ENCODE measurements at regions of chr10 and their contacts with region 1.

Region 1: DNA sequence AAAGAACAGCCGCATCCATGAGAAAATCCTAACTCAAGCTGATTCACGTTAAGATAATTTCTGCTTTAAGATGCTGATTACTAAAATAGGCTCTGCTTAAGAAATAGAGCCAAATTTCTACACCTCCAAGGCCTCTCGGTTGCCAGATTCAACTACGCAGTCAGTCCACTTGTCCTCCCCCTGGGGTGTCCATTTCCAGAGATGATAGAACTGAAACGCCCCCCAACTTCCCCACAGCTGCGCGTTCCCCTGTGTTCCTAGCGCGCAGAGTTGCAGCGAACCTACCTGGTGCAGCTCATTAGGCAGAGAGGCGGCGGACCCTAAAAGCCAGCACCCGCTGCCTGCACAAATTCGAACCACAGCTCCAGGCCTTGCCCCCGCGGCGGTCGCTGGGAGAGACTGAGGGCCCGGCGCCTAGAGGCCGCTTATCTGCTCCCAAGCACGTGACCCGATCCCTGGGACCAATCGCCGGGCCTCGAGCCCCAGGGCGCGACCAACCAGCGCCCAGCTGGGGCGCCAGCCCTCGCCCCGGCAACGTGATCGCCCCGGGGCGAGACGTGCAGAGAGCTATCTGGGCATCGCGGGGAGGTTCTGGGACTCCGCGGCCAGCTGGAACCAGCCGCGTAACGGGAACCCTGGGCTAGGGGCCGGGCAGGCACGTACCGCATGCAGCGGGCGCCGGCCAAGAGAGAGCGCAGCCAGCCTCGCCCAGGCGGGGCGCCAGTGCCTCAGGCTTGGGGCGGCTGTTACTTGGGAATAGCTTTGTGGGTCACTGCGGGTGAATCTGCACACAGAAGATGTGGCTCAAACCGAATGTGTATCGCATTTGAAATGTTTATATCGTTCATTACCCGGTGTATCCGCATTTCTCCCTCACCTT is at the start of gene PPP1R3C:
- DNase-seq: peak; percentile 82
- H3K4me3 ChIP-seq: peak within 1 kb of the TSS; percentile 85
- H3K27ac ChIP-seq: peak within 1 kb of the TSS; percentile 60
- H3K27me3 ChIP-seq: no peaks in the 10 kb centered on the region
- CTCF ChIP-seq: peak; percentile 49
- polyA plus RNA-seq, gene PPP1R3C: 42.2 and 51.1 TPM in 2 replicates

Region 2: GRCh38 chr10:91298224-91298871 is 334.6 kb before region 1 on chr10:
- CTCF ChIA-PET with region 1: interaction called, 112 read pairs
- POLR2A ChIA-PET with region 1: interaction called, 3 read pairs
- DNase-seq: peak; percentile 55
- H3K4me3 ChIP-seq: peak overlapping the region; percentile 54
- H3K27ac ChIP-seq: peak overlapping the region; percentile 21
- H3K27me3 ChIP-seq: no peaks in the 10 kb centered on the region
- CTCF ChIP-seq: peak; percentile 95

Region 3: DNA sequence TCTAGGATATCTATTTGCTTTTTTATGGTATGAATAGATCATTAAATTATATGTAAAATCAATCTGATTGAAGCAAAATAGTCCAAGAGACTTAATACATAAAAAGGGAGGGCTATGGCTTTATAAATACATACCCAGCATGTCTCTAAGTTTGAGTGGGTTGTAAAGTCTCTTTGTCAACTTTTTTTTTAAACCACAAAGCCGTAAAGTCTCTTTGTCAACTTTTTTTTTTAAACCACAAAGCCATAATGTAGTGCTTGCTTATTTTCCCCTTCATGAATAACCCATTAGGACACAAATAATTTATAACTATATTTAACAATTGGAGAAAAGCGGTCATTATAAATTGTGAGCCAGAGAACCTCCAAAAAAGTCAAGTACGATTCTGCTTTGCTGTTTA is 217.1 kb before region 1 on chr10:
- CTCF ChIA-PET with region 1: interaction called, 20 read pairs
- POLR2A ChIA-PET with region 1: interaction called, 5 read pairs
- DNase-seq: no peak
- H3K4me3 ChIP-seq: no peak overlapping the region
- H3K27ac ChIP-seq: no peak overlapping the region
- H3K27me3 ChIP-seq: no peaks in the 10 kb centered on the region
- CTCF ChIP-seq: no peak

Region 4: GRCh38 chr10:91511549-91512330 is 121.2 kb before region 1 on chr10:
- CTCF ChIA-PET with region 1: interaction called, 16 read pairs
- POLR2A ChIA-PET with region 1: interaction called, 7 read pairs
- DNase-seq: peak; percentile 38
- H3K4me3 ChIP-seq: no peak overlapping the region
- H3K27ac ChIP-seq: no peak overlapping the region
- H3K27me3 ChIP-seq: no peaks in the 10 kb centered on the region
- CTCF ChIP-seq: no peak

Region 5: DNA sequence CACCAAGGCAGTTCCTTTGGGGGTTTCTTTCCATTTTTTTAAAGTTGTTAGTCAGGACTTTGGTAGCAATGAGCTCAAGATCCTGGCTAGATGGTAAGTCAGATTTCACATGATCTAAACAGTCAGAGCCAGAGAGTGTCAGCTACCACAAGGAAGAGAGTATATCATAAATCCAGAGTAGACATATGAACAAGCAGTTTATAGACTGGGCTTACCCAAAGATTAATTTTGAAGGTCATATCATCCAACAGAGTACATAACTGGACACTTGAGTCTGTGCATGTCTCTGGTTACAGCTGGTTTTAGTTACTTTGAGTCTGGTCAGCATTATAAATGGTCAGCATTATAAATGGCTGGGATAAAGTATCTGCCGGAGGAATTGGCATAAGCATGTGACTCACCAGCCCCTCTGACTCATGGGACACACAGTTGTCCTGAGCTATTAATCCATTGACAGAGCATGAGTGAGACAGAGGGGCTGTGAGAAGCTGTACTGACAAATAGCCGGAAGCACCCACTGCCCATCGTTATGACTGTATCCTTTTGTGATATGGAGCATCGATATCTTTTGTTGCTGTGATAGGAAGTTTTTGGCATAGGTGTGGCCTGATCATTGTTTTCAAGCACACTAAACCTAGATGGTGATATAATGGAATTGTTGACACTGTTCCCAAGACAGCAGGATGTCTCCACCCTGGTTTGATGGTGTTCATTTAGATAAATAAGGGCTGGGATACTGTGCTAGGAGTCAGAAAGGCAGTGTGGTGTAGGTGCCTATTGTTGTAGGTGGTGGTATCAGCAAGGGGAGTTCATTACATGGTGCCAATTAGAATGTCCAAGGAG is 19.3 kb before region 1 on chr10:
- CTCF ChIA-PET with region 1: interaction called, 14 read pairs
- POLR2A ChIA-PET with region 1: interaction called, 38 read pairs
- DNase-seq: peak; percentile 89
- H3K4me3 ChIP-seq: no peak overlapping the region
- H3K27ac ChIP-seq: peak overlapping the region; percentile 96
- H3K27me3 ChIP-seq: no peaks in the 10 kb centered on the region
- CTCF ChIP-seq: no peak

Region 6: GRCh38 chr10:91652364-91652763 is 19.5 kb after region 1 on chr10:
- CTCF ChIA-PET with region 1: interaction called, 26 read pairs
- POLR2A ChIA-PET with region 1: interaction called, 6 read pairs
- DNase-seq: peak; percentile 62
- H3K4me3 ChIP-seq: no peak overlapping the region
- H3K27ac ChIP-seq: no peak overlapping the region
- H3K27me3 ChIP-seq: no peaks in the 10 kb centered on the region
- CTCF ChIP-seq: no peak

Region 7: GRCh38 chr10:91694170-91694794 is 61.4 kb after region 1 on chr10:
- CTCF ChIA-PET with region 1: interaction called, 31 read pairs
- POLR2A ChIA-PET with region 1: interaction called, 5 read pairs
- DNase-seq: no peak
- H3K4me3 ChIP-seq: no peak overlapping the region
- H3K27ac ChIP-seq: no peak overlapping the region
- H3K27me3 ChIP-seq: no peaks in the 10 kb centered on the region
- CTCF ChIP-seq: peak; percentile 78

Measured in AG04450 (cell line).